Astrocyte of the cerebellum (primary cell): ENCODE measurements at regions of chr12 and their contacts with region 1.

Region 1: GRCh38 chr12:114817571-114818425 is 133.8 kb upstream of the TBX3 start:
- DNase-seq: no peak
- H3K4me3 ChIP-seq: no peak overlapping the region
- CTCF ChIP-seq: no peak

Region 2: DNA sequence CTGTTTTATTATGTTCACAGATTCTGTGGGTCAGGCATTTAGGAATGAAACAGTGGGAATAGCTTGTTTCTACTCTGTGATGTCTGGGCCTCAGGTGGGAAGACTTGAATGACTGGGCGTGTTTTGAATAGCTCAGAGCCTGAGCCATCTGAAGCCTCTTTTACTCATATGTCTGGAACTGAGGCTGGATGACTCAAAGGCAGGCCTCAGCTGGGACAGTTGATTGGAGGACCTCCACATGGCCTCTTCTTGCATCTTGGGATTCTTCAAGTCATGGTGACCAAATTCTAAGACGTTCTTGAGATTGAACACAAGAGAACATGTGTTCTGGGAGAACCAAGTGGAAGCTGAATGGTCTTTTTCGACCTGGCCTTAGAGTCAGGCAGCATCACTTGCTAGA is 88.1 kb before region 1 on chr12:
- in situ Hi-C with region 1: loop called (anchors 5 kb)
- DNase-seq: no peak
- H3K4me3 ChIP-seq: no peak overlapping the region
- CTCF ChIP-seq: no peak

Region 3: DNA sequence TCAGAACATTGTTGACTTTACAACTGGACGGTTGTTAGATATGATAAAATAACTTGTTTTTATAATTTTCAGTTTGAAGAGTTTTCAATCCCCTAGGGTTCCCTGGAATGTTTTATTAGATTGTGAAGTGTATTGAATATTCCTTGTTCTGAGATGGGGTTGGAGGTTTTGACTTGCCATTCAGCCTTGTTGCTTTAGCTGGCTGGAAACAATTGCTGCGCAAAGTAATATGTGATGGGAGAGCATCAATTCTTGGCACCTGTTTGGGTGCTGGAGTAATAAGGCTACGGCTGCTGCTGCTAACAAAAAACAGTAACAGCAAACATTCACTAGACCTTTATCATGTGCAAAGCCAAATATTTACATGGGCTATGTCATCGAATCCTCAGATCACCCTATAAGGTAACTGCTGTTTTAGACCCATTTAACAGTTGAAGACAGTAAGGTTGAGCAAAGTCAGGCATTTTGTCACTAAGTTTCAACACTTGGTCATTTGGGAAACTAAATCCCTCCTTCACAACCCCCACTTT is 107.2 kb after region 1 on chr12:
- in situ Hi-C with region 1: no loop called
- DNase-seq: no peak
- H3K4me3 ChIP-seq: no peak overlapping the region
- CTCF ChIP-seq: no peak